ENCODE measurements at regions of chr18 and their contacts with region 1.

Region 1: DNA sequence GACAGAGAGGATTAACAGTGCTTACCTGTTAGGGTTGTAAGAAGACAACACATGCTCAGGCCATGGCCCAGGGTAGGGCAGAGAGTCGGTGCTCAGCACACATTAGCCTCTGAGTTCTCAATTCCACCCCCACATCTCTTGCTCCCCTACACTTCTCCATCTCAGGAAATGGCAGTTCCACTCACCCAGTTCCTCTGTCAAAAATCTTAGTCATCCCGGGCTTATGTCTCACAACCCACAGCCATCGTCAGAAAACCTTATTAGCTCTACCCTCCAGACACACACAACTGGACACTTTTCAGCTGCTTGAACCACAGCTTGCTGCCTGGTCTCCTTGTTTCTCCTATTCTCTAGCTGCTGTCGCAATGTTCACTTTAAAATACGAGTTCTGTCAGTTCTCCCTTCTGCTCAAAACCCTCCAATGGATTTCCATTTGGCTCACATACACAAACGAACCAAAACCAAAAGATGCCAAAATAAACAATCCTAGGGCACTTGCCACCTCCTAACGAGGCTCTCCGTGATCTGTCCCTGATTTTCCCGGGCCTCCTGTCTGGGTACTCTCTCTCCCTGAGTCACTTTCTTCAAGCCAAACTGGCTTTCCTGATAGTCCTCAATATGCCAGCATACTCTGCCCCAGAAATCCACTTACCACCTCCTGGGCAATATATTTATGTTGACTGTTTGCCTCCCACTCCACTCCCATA is 89.7 kb downstream of the KCTD1 start:
- DNase-seq: no peak

Region 2: DNA sequence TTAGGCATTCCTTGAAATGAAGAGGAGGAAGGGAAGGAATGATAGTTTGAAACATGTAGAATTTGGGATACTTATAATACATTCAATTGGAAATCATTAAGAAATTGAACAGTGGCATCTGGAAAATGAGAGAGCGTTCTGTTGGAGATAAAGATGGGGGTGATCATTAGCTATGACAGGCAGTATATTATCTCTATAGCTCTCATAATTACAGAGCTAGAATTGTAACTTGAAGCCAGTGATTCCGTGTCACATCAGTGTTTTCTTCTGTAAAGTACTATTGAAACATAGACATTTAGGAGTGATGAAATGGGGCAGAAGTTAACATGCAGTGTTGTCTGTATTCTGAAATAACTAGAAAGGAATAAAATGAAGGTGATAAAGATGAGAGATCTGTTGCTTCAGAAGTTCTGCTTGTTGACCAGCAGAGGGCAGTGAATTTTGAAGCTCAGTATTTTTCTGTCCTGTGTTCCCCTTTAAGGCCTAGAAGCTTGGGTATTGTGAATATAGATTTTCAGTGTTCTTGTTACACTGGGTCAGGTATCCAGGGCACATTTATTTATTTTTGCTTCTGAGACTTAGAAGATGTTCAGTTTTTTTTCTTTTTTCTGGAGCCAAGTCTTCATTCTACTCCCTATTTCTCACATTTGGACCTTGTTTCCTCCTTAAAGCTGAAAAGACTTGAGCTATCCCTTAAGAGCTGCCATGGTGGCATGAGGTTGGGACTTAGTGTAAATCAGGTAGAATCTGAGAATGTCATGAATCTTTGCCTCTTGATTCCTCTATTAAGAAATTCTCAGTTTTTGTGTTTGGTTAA is 75.0 kb before region 1 on chr18:
- intact Hi-C with region 1: loop called (anchors 5 kb)
- DNase-seq: no peak

Region 3: GRCh38 chr18:26422472-26423162 is 36.1 kb before region 1 on chr18:
- intact Hi-C with region 1: no loop called
- DNase-seq: no peak

Region 4: DNA sequence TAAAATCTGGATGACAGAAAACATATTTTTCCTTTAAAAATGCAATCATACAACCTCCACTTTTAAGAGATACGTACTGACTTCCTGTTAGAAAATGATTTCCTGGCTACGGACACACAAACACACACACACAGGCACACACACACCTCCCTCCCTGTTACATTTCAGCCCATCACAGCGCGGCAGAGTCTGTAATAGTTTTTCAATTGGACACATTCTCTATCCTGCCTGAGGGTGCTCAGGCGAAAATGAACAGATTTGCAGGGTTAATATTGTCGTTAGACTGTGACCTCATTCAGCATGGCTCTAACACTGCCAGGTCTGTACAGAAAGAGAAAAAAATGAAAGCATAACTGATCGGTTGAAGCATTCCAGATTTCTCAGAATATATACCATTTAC is 44.7 kb after region 1 on chr18:
- intact Hi-C with region 1: no loop called
- DNase-seq: no peak

Region 5: DNA sequence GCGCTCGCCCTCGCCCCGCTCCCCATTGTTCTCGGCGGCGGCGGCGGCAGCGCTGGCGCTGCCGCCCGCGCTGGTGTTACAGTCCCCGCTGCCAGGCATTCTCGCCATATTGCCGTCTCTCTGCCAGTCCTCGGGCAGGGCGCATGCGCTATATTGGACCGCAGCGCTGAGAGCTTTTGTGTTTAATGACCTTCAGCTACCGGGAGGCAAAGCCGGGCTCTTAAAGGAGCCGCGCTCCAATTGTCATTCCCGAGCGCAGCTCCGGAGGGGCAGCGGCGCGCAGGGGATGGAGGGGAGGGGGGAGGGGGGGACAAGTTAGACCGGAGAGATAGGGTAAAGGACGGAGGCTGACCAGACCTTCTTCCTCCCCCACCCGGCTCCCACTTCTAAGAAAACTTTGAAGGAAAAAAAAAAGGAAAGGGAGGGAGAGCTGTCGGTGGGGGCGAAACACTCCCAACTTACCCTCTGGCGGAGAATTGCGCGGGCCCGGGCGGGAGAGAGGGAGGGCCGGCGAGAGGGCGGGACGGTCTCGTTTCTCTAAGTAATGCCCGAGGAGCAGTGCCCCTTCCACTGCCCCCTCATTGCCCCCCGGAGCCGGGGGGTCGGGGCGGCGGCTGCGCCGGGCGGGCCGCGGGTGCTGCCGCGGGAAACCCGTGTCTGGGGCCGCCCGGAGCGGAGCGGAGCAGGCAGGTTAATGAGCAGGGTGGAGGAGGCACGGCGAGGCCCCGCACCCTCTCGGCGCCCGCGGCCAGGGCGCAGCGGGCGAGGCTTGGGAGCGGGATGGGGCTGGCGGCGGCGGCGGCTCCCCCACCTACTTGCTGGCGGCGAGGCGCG is 90.0 kb after region 1 on chr18 and contains the start of gene KCTD1:
- intact Hi-C with region 1: loop called (anchors 10 kb)
- DNase-seq: peak; percentile 70 to 95 (median 76)

Region 6: GRCh38 chr18:27263369-27263768 is 804.7 kb after region 1 on chr18:
- intact Hi-C with region 1: no loop called
- DNase-seq: no peak